ENCODE measurements at regions of chr9 and their contacts with region 1.

Region 1: DNA sequence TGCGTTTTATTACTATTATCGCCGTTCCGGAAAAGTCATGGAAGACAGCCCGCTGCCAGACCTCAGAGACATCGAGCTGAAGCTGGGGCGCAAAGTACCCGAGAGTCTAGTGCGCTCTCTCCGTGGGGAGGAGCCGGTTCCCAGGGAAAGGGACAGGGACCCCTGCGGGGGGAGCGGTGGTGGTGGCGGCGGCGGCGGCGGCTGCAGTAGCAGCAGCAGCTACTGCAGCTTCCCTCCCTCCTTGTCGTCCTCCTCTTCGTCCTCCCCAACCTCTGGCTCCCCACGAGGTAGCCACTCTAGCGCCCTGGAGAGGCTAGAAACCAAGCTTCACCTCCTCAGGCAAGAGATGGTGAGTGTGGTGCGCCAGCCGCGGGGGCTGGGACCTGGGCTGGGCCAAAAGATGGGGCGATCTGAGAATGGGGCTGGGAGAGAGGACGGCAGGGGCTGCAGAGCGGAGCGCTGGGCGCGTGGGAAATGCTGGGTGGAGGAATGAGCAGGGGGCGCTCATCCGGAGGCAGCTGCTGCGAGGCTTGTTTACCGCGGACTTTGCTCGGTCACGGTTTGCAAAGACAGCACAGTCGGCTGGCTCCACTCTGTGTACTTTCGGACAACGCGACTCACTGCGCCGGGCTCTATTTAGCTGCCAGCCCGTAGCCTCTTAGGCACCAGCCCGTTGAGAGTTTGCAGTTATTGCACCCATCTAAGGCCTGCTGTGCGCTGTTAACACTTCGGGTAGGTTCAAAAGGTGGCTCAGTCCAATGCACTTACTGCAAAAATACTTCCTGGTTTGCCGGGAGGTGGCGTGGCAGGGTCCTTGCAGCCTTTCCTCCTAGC is 1.1 kb downstream of the LURAP1L start:
- DNase-seq: no peak

Region 2: DNA sequence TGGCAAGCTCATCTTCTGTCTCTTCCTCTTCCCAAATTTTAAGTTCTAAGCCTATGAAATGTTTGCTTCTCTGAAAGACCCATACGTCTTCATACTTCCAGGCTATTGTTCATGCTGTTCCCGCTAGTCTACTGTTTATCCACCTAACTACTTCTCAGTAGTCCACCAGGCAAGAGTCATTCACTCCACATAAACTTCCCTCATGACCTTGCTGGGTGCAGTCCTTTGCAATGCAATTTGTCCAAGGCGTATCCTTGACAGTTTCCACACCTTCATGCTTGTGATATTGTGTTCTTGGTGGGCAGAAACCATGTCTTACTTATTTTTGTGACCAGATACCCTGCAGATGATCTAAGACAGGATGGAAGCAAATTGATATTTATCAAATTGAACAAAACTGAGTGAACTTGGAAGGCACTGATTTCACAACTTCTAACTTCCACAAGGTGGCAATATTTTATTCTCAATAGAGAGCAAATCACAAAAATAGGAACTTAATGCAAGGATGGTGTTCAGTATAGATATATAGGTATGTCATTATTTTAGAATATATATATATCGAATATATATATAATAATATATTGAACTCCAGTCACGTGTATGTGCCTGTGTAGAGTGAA is 52.4 kb before region 1 on chr9:
- intact Hi-C with region 1: loop called in 1 of 2 experiments (anchors 10 kb)
- DNase-seq: no peak

Region 3: GRCh38 chr9:12753931-12754330 is 22.0 kb before region 1 on chr9:
- intact Hi-C with region 1: no loop called
- DNase-seq: no peak

Region 4: GRCh38 chr9:12813960-12814876 is 38.3 kb after region 1 on chr9:
- intact Hi-C with region 1: loop called in 1 of 2 experiments (anchors 5 kb)
- DNase-seq: peak; percentile 85

Region 5: DNA sequence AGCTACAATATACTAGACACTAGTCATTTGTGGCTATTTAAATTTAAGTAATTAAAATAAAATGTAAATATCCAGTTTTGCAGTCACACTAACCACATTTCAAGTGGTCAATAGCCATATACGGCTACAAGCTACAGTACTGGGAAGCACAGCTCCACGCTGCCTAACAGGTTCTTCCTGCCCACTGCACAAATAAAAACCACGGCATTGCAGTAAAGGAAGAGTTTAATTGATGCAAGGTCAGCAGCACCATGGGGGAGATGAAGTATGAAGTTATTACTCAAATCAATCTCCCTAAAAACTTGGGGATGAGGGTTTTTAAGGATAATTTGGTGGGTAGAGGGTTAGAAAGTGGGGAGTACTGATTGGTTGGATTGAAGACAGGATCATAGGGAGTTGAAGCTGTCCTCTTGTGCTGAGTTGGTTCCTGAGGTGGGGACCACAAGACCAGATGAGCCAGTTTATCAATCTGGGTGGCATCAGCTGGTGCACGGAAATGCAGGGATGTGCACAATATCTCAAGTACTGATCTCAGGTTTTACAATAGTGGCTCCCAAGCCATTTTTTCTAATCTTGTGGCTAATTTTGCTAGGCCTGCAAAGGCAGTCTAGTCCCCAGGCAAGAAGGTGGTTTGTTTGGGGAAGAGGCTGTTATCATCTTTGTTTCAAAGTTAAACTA is 133.2 kb after region 1 on chr9:
- intact Hi-C with region 1: no loop called
- DNase-seq: no peak

Measured in posterior vena cava (tissue), 2 donors.